ENCODE measurements at regions of chr16 and their contacts with region 1.

Region 1: DNA sequence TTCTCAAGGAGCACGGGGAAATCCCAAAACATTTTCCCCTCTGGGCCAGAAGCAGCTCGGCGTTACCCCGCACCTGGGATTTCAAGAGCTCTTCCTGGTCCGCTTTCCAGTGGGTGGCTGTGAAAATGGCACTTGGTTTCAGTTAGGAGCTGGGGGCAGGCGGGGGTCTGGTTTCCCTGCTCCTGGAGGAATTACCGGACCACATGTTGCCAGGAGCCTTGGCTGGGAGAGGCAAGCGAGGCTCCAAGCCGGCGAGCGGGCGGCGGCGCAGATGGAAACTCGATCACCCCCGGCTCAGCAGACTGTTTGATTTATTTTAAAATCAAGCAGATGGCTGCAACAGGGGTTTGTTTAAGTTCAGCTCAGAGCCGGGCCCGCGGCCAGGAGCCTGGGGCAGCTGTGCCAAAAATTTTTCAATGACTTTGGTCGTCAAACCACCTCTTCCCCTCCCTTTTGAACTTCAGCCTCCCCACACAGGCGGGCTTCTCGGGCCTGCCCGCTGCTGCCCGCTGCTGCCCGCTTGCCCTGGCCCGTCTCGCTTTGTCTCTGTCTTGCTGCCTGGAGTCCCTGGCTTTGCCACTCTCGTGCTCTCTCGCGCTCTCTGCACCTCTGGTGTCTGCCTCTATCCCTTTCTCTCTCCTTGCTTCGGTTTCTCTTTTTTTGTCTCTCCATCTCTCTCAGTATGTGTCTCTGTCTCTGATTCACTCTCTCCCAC is 108.0 kb upstream of the CIBAR2 start:
- DNase-seq: peak; percentile 83
- ATAC-seq: peak; percentile 89

Region 2: DNA sequence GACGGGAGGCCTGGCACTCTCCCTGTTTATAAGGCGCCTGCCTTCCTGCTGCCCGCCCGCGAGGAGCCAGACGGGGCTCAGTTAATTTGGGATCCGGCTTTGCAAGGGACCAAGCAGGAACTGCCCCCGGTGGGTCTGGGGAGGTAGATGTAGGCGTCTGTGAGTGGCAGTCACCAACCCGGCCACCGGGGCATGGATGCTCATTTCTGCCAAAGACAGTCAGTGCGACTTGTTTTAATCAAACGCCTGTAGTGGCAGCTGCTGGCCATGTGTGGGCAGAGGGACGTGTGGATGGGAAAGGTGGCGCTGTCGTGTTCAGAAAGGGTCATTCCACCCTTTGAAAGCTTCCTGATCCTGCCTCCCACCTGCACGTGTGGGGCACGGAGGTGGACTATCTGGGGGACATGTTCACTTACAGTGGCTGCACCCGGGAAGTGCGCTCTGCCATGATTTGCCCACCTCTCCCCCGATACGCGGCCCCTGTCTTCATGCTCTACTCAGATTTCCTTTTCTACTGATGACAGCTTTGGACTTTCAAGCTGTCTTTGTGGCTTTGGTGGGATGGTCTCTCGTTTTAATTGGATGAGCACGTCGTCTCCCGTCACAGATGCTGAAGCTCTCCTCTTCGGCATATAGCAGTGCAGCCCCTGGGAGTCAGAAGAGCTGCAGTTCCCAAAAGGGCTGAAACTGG is 47.7 kb before region 1 on chr16:
- intact Hi-C with region 1: loop called (anchors 10 kb)
- DNase-seq: peak; percentile 71
- ATAC-seq: peak; percentile 53

Region 3: GRCh38 chr16:85275533-85276249 is 55.4 kb after region 1 on chr16:
- intact Hi-C with region 1: no loop called
- DNase-seq: peak; percentile 83
- ATAC-seq: peak; percentile 77

Measured in left ventricle myocardium superior (tissue), 1 donor.